ENCODE measurements at regions of chr4 and their contacts with region 1.

Region 1: GRCh38 chr4:1167247-1167949 is 5.0 kb downstream of the SPON2 start:
- DNase-seq: peak; percentile 93
- H3K4me3 ChIP-seq: peak overlapping the region; percentile 59 to 67 (median 66)
- H3K27ac ChIP-seq: peak overlapping the region; percentile 29 to 58 (median 42)
- H3K4me1 ChIP-seq: peaks cover 31 to 47% (median 43%) of the 10 kb centered on the region in 4 donors
- H3K27me3 ChIP-seq: peaks cover 7 to 31% (median 22%) of the 10 kb centered on the region in 4 donors
- CTCF ChIP-seq: peak in 2 of 3 experiments; percentile 85 to 92
- EP300 ChIP-seq: no peak
- POLR2A ChIP-seq: no peak

Region 2: GRCh38 chr4:1207603-1208265 is 40.3 kb after region 1 on chr4:
- intact Hi-C with region 1: loop called (anchors 5 kb)
- DNase-seq: no peak
- H3K4me3 ChIP-seq: peak overlapping the region in 3 of 4 donors; percentile 9 to 24 (median 22)
- H3K27ac ChIP-seq: peak overlapping the region; percentile 58 to 75 (median 66)
- H3K4me1 ChIP-seq: peaks cover 50 to 85% (median 76%) of the 10 kb centered on the region in 4 donors
- H3K27me3 ChIP-seq: no peaks in the 10 kb centered on the region
- CTCF ChIP-seq: no peak
- EP300 ChIP-seq: no peak
- POLR2A ChIP-seq: no peak

Region 3: GRCh38 chr4:1266881-1267763 is 99.7 kb after region 1 on chr4:
- intact Hi-C with region 1: loop called (anchors 2 kb)
- DNase-seq: no peak
- H3K4me3 ChIP-seq: no peak overlapping the region
- H3K27ac ChIP-seq: no peak overlapping the region
- H3K4me1 ChIP-seq: no peaks in the 10 kb centered on the region
- H3K27me3 ChIP-seq: no peaks in the 10 kb centered on the region
- CTCF ChIP-seq: no peak
- EP300 ChIP-seq: no peak
- POLR2A ChIP-seq: no peak

Region 4: DNA sequence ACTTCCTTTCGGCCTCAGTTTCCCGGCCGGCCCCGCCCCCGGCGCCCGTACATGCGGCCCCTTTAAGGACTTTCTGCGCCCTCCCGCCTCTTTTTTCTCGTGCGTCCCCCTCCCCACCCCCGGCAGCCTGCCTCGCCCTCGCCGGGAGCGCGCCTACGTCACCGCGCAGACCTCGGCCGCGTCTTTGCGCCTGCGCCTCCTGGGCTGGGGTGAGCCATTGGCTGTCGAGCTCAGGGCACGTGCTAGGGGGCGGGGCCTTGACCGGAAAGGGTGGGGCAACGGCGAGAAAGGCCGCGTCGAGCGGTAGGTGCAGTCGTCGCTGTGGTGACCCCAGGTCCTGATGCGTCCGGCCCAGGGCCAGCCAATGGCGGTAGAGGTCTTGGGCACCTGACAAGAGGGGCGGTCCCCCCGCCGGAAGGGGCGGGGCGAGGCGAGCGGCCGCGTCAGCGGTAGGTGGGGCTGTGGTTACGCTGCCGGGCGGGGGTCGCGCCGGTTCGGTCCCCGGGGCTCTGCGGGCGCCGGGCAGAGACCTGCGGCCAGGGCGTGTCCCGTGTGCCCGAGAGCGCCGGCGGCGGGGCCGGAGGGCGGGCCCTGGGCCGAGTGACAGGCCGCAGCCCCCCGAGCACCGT is 179.5 kb after region 1 on chr4 and contains the start of gene UVSSA:
- intact Hi-C with region 1: loop called (anchors 10 kb)
- DNase-seq: peak; percentile 100
- H3K4me3 ChIP-seq: peak within 1 kb of the TSS; percentile 96 to 99 (median 98)
- H3K27ac ChIP-seq: peak within 1 kb of the TSS; percentile 96 to 100 (median 98)
- H3K4me1 ChIP-seq: peaks cover 21 to 50% (median 46%) of the 10 kb centered on the region in 4 donors
- H3K27me3 ChIP-seq: no peaks in the 10 kb centered on the region
- CTCF ChIP-seq: no peak
- EP300 ChIP-seq: no peak
- POLR2A ChIP-seq: peak; percentile 82
- total RNA-seq, gene UVSSA: 8.9 to 16.5 (median 13.1) TPM

Measured in esophagus muscularis mucosa (tissue), 4 donors.